Body of pancreas (tissue), 4 donors: ENCODE measurements at regions of chr5 and their contacts with region 1.

Region 1: DNA sequence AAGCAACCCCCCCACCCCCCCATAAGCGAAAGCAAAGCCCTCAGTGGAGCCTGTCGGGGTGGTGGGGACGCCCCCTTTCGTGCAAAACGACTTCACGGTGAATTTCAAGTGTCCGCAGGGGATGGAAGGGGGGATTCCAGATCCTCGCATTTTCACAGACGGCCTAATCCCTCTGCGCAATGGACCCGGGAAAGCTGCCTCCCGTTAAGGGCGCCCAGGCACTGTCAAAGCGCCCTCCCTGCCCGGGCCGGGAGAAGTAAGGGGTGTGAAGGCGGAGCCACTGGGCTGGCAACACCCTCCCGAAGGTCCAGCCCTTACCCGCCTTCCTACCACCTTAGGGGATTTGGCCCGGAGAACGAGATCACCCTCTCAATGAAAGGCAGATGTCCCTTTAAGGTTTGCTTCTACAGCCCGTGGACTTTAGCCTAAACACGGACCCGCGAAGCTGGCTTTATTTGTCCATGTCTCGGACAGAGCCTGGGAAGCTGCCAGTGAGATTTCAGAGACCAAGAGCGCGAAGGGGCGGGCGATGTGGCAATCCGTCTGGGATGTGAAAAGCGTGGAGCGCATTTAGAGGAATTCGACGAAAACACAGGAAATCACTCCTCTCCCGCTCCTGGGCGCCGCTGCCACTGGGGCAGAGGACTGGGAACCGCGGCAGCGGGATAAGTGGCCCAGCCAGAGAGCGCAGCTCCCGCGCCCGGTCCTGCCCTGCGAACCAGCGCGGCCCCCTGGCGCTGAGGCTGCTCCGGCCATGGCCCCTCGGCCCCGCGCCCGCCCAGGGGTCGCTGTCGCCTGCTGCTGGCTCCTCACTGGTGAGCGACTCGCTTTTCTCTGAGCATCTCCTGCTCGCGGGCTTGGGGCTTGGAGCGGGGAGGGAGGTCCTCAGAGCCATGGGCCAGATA is at the starts of genes ITGA1 and PELO:
- DNase-seq: peak; percentile 66 to 79 (median 74)
- ATAC-seq: peak; percentile 80
- H3K4me3 ChIP-seq: peak within 1 kb of the TSS; percentile 17 to 36
- H3K27ac ChIP-seq: peak within 1 kb of the TSS; percentile 28 to 80 (median 69)
- H3K4me1 ChIP-seq: peaks cover 18% of the 10 kb centered on the region
- H3K27me3 ChIP-seq: no peaks in the 10 kb centered on the region
- CTCF ChIP-seq: peak in 3 of 7 experiments; percentile 24 to 42 (median 28)
- POLR2A ChIP-seq: peak in 2 of 3 donors; percentile 48 to 50
- total RNA-seq, gene ITGA1: 6.9 to 11.2 TPM
- total RNA-seq, gene PELO: 3.6 to 8.3 TPM

Region 2: DNA sequence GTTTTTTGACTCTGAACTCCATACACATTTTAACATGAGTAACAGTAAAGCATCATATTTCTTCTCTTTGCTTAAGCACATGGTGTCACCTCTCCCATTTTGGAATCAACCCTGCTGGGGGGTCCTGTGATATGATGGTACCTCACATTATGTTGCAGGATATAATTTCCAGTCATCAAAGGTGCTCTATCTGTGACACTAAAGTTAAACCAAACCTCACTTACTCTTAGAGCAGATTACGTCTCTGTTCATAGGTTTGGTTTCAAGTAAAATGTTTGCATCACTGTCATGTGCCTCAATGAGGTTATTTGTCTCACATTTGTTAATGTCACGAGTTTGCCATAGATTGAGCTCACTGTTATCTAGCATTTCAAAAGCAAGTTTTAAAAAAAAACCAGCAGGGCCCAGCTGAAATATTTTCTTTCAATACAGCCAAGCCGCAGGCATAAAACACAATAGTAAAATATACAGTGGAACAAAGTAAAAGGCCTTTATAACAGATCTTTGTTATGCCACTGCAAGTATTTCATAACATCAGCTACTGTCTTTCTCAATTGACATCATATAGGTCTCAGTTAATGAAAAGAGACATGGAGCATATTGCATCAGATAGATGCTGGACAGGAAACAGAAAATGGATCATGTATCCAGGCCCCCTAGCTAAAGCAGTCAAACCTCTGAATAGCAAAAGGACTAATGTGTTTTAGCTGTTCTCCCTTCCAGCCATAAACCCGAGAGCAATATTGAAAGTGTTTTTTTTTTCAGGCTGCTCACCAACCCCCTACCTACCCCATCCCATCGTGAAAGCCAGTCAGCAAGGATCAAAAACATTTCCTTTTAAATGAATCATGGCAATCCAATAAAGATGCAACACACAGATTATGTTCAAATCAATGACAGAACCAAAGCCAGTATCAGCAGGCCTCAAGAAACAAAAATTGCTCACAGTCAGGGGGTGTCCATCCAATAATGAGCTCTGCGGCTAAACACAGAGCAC is 182.2 kb before region 1 on chr5:
- intact Hi-C with region 1: no loop called
- DNase-seq: no peak
- ATAC-seq: no peak
- H3K4me3 ChIP-seq: no peak overlapping the region
- H3K27ac ChIP-seq: no peak overlapping the region
- H3K4me1 ChIP-seq: peaks cover 10% of the 10 kb centered on the region
- H3K27me3 ChIP-seq: no peaks in the 10 kb centered on the region
- CTCF ChIP-seq: no peak
- POLR2A ChIP-seq: no peak

Region 3: DNA sequence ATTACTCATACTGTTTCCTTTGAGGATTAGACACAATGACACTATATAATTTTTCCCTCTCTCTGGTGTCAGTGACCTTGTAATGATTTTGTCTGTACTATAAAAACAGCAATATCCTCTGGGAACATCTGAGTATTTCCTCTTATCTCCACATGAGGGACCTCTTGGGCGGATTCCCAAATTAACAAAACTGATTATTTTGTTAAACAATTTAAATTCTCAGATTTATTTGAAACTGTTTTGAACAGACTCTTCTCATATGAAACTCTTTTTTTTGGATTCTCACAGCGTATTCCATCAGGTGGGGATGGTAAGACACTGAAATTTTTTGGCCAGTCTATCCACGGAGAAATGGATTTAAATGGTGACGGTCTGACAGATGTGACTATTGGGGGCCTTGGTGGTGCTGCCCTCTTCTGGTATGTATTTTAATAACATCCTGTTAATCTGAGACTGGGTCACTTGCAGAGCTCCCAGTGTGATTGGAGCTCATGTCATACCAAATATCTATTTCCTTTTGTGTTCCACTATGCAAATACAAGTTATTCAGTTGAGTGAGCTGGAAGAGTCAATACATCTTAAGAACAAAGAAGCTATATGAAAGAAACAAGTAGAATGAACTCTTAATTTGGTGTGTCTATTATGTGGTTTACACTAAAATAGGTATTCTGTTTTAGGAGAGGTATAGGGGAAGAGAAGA is 127.5 kb after region 1 on chr5:
- intact Hi-C with region 1: loop called (anchors 10 kb)
- DNase-seq: peak; percentile 32 to 59 (median 38)
- ATAC-seq: peak; percentile 85
- H3K4me3 ChIP-seq: no peak overlapping the region
- H3K27ac ChIP-seq: no peak overlapping the region
- H3K4me1 ChIP-seq: no peaks in the 10 kb centered on the region
- H3K27me3 ChIP-seq: no peaks in the 10 kb centered on the region
- CTCF ChIP-seq: peak; percentile 42 to 82 (median 66)
- POLR2A ChIP-seq: no peak